ENCODE measurements at regions of chrX and their contacts with region 1.

Region 1: DNA sequence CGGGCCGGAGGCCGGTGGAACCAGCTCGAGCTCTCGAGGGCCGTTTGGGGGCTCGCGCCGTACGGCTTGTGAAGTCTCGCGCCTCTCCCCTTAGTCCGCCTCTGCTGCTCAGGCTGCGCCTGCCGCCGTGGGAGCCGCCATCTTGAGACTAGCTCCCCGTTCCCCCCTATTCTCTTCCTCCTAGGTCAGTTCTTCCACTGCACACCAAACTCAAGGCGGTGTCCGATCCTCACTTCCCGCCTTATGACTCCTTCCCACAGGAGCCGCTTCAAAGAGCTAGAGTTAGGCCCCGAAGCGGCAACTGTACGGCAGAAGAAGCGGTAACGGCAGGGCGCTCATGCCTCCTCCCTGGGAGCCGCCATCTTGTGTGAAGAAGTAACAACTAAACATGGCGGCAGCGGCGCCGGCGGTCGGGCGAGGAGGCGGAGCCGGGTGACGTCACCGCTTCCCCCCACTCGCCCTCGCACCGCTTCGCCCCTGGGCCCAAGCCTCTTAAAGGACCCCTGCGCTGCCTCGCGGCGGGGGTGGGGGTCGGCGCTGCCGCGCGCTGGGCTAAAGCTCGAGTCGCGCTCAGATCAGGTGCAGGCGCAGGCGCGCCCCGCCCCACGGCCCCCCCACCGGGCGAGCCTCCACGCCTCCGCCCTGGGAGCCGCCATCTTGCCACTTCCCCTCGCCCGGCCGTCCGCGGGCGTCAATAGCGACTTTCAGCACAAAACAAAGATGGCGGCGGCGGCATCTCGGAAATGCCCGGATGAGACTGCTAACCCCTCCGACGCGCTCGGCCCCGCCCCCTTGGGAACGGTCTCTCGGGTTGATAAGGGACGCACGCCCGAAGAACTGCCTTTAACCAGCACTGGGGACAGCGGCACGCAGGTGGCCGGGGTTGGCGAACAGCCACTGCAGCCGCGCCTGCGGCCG is at the start of gene HCFC1:
- DNase-seq: peak; percentile 94
- ATAC-seq: peak; percentile 34
- H3K4me3 Mint-ChIP-seq: peak within 1 kb of the TSS; percentile 94
- H3K27ac Mint-ChIP-seq: peak within 1 kb of the TSS; percentile 100
- H3K4me1 Mint-ChIP-seq: peaks cover 31% of the 10 kb centered on the region
- H3K27me3 Mint-ChIP-seq: no peaks in the 10 kb centered on the region
- total RNA-seq, gene HCFC1: 99.5 to 147 TPM

Region 2: GRCh38 chrX:153794018-153794896 is 177.5 kb before region 1 on chrX and contains the starts of genes IDH3G and SSR4:
- CTCF ChIA-PET with region 1: interaction called, 3 read pairs
- POLR2A ChIA-PET with region 1: no interaction called
- intact Hi-C with region 1: loop called (anchors 1 kb)
- DNase-seq: peak; percentile 96
- ATAC-seq: peak; percentile 97
- H3K4me3 Mint-ChIP-seq: peak within 1 kb of the TSS; percentile 93
- H3K27ac Mint-ChIP-seq: peak within 1 kb of the TSS; percentile 93
- H3K4me1 Mint-ChIP-seq: peaks cover 21% of the 10 kb centered on the region
- H3K27me3 Mint-ChIP-seq: no peaks in the 10 kb centered on the region
- total RNA-seq, gene IDH3G: 48.8 to 62.4 TPM
- total RNA-seq, gene SSR4: 124 to 146 TPM

Region 3: GRCh38 chrX:153984351-153985178 is 12.9 kb after region 1 on chrX:
- CTCF ChIA-PET with region 1: interaction called, 3 read pairs
- POLR2A ChIA-PET with region 1: interaction called, 3 read pairs
- intact Hi-C with region 1: loop called in 1 of 2 experiments (anchors 1 kb)
- DNase-seq: peak; percentile 80
- ATAC-seq: peak; percentile 64
- H3K4me3 Mint-ChIP-seq: peak overlapping the region; percentile 78
- H3K27ac Mint-ChIP-seq: peak overlapping the region; percentile 99
- H3K4me1 Mint-ChIP-seq: peaks cover 49% of the 10 kb centered on the region
- H3K27me3 Mint-ChIP-seq: no peaks in the 10 kb centered on the region

Region 4: DNA sequence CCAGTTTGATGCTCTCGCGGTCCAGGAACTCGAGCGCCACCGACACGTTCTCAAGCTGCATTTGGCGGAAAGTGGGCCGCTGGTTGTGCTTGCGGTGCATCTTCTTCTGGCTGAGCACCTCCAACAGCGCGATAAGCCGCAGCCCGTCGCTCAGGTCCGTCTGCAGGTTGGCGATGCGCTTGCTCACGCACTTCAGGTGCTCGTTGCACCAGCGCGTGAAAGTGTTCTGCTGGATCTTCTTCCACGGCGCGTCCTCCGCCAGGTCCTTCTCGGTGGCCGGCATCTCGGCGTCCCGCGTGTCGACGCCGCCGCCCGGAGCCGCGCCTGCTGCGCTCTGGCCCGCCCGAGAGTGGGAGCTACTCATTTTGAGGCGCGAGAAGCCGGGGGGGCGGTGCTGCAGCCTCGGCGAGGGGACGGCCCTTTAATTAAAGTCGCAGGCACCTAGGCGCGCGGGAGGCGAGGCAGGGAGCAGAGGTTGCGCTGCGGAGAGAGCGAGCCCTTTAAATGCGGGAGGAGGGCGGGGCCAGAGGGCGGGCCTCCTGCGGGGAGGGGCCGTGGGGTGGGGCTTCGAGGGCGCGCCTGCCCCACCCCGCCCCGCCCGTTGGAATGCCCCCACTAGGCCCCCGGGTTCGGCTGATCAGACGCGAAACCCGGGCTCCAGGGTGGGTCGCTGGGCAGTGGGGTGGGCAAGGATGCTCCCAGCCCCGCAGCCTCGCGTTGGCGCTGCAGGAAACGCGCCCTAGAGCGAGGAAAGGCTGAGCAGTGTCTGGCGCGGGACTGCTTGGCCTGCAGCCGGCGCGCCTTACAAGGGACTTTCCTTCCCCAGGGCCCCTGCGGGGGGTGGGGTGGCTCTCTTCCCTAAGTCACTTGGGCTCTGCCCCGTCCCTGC is 399.4 kb after region 1 on chrX:
- CTCF ChIA-PET with region 1: interaction called, 3 read pairs
- POLR2A ChIA-PET with region 1: interaction called, 4 read pairs
- intact Hi-C with region 1: loop called (anchors 2 to 10 kb)
- DNase-seq: peak; percentile 96
- ATAC-seq: peak; percentile 55
- H3K4me3 Mint-ChIP-seq: peak overlapping the region; percentile 86
- H3K27ac Mint-ChIP-seq: peak overlapping the region; percentile 55
- H3K4me1 Mint-ChIP-seq: peaks cover 22% of the 10 kb centered on the region
- H3K27me3 Mint-ChIP-seq: no peaks in the 10 kb centered on the region

Region 5: GRCh38 chrX:154428176-154429010 is 456.7 kb after region 1 on chrX and contains the start of gene ATP6AP1:
- CTCF ChIA-PET with region 1: no interaction called
- POLR2A ChIA-PET with region 1: no interaction called
- intact Hi-C with region 1: loop called in 1 of 2 experiments (anchors 5 kb)
- DNase-seq: peak; percentile 94
- ATAC-seq: peak; percentile 99
- H3K4me3 Mint-ChIP-seq: peak within 1 kb of the TSS; percentile 77
- H3K27ac Mint-ChIP-seq: peak within 1 kb of the TSS; percentile 65
- H3K4me1 Mint-ChIP-seq: peaks cover 26% of the 10 kb centered on the region
- H3K27me3 Mint-ChIP-seq: no peaks in the 10 kb centered on the region
- total RNA-seq, gene ATP6AP1: 25.6 to 28.6 TPM

Region 6: DNA sequence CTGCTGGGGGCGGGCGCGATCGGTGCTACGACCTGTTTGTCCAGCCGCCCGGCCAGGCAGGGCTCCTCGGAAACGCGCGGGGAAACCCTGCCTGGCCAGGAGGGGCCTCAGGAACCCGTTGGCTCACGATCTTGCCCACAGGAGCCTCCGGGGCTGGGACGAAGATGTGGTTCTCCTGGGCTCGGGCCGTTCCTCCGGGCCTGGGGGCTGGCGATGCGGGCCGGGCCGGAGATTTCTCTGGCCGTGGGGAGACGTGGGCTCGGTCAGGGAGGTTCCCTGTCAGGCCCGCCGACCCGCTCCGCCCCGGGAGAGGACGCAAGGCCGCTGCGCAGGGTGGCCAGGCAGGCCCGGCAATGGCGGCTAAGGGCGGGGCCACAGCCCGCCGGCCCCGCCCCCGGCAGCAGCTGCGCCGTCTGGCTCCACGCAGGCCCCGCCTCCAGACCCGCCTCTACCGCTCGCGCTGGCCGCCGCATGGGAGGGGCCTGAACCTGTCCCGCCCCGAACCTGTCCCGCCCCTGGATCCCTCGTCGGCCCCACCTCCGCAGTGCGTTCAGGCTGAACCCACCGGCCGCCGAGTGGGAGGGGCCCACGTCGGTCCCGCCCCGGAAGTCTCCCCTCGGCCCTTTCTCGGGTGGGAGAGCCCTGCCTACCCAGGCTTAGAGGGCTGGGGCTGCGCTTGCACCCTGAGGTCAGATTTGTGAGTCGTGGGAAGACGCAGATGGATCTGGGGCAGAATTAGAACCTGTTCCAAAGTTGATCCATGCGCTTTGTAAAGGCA is 544.4 kb after region 1 on chrX and contains the start of gene FAM3A:
- CTCF ChIA-PET with region 1: interaction called, 3 read pairs
- POLR2A ChIA-PET with region 1: no interaction called
- intact Hi-C with region 1: loop called in 1 of 2 experiments (anchors 1 kb)
- DNase-seq: peak; percentile 97
- ATAC-seq: peak; percentile 98
- H3K4me3 Mint-ChIP-seq: peak within 1 kb of the TSS; percentile 81
- H3K27ac Mint-ChIP-seq: peak within 1 kb of the TSS; percentile 90
- H3K4me1 Mint-ChIP-seq: peaks cover 30% of the 10 kb centered on the region
- H3K27me3 Mint-ChIP-seq: no peaks in the 10 kb centered on the region
- total RNA-seq, gene FAM3A: 27.6 to 30.5 TPM

Measured in activated CD4-positive, alpha-beta T cell treated with anti-CD3 and anti-CD28 coated beads for 36 hours (primary cell).